Activated CD4-positive, alpha-beta memory T cell treated with anti-CD3 and anti-CD28 coated beads for 36 hours (primary cell): ENCODE measurements at regions of chr6 and their contacts with region 1.

Region 1: DNA sequence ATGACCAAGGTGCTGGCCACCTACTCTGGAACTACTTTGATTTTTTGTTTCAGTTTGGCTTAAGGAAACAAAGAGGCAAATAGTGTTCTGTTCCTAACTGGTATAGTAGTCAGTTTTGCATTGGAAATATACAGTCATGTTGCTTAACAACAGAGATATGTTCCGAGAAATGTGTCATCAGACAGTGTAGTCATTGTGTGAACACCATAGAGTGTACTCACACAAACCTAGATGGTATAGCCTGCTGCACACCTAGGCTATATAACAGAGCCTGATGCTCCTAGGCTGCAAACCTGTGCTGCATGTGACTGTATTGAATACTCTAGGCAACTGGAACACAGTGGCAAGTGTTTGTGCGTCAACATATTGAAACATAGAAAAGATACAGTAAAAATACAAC is 80.4 kb downstream of the ARID1B start:
- DNase-seq: peak; percentile 51
- H3K4me3 Mint-ChIP-seq: no peak overlapping the region
- H3K27ac Mint-ChIP-seq: peak overlapping the region; percentile 90
- H3K4me1 Mint-ChIP-seq: peaks cover 78% of the 10 kb centered on the region
- H3K27me3 Mint-ChIP-seq: no peaks in the 10 kb centered on the region

Region 2: GRCh38 chr6:156686995-156687788 is 170.4 kb before region 1 on chr6:
- CTCF ChIA-PET with region 1: no interaction called
- POLR2A ChIA-PET with region 1: no interaction called
- intact Hi-C with region 1: loop called (anchors 2 kb)
- DNase-seq: peak; percentile 77
- H3K4me3 Mint-ChIP-seq: peak overlapping the region; percentile 77
- H3K27ac Mint-ChIP-seq: peak overlapping the region; percentile 73
- H3K4me1 Mint-ChIP-seq: peaks cover 24% of the 10 kb centered on the region
- H3K27me3 Mint-ChIP-seq: no peaks in the 10 kb centered on the region

Region 3: DNA sequence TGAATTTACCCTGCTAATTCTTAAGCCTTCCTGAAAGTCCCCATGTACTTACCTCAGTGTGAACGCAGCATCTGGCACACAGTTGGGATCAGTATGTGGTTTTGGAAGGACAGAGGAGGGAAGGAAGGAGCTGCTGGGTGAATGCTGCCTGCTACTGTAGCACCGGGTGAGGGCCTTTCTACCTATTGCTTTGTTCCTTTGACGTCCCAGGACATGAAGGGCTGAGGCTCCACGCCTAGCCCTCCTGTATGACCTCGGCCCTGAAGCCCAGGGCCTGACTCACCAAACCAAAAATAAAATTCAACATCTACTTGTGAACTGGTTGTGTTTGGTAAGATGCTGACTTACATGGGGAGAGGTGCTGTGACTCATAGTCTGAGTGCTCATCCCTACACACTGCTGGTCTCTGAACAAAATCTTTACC is 29.3 kb before region 1 on chr6:
- CTCF ChIA-PET with region 1: no interaction called
- POLR2A ChIA-PET with region 1: no interaction called
- intact Hi-C with region 1: loop called (anchors 1 kb)
- DNase-seq: peak; percentile 47
- H3K4me3 Mint-ChIP-seq: no peak overlapping the region
- H3K27ac Mint-ChIP-seq: peak overlapping the region; percentile 65
- H3K4me1 Mint-ChIP-seq: peaks cover 80% of the 10 kb centered on the region
- H3K27me3 Mint-ChIP-seq: no peaks in the 10 kb centered on the region

Region 4: GRCh38 chr6:156953479-156954146 is 96.0 kb after region 1 on chr6:
- CTCF ChIA-PET with region 1: no interaction called
- POLR2A ChIA-PET with region 1: no interaction called
- intact Hi-C with region 1: loop called (anchors 1 kb)
- DNase-seq: peak; percentile 41
- H3K4me3 Mint-ChIP-seq: no peak overlapping the region
- H3K27ac Mint-ChIP-seq: no peak overlapping the region
- H3K4me1 Mint-ChIP-seq: peaks cover 62% of the 10 kb centered on the region
- H3K27me3 Mint-ChIP-seq: no peaks in the 10 kb centered on the region

Region 5: DNA sequence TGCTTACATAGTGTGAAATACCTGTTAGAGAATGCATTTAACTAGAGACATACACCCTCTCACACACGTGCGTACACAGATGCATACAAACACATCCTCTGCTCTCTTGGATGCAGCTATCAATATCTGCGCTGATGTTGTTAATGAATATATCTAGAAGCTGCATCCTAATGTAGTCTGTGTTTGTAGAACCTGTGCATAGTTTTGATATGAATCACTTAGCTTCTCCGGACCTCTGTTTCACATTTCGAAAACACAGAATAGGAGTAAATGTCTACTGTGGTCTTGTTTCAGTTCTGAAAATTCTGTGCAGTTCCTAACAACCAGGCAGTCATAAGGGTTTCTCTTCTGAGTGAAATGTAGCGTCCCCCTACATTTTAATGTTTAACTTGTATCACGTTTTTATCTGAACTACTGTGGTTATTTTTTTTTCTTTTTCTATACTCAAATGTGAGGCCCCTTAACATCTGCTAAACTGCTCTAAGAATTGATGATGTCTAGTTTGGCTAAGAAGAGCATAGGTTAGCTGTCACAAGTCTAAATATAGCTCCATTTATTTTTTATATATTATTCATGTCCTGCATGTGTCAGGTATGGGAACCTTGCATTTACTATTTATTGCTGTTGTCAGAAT is 211.2 kb after region 1 on chr6:
- CTCF ChIA-PET with region 1: no interaction called
- POLR2A ChIA-PET with region 1: no interaction called
- intact Hi-C with region 1: loop called (anchors 1 kb)
- DNase-seq: no peak
- H3K4me3 Mint-ChIP-seq: peak overlapping the region; percentile 18
- H3K27ac Mint-ChIP-seq: peak overlapping the region; percentile 49
- H3K4me1 Mint-ChIP-seq: peaks cover 47% of the 10 kb centered on the region
- H3K27me3 Mint-ChIP-seq: no peaks in the 10 kb centered on the region

Region 6: DNA sequence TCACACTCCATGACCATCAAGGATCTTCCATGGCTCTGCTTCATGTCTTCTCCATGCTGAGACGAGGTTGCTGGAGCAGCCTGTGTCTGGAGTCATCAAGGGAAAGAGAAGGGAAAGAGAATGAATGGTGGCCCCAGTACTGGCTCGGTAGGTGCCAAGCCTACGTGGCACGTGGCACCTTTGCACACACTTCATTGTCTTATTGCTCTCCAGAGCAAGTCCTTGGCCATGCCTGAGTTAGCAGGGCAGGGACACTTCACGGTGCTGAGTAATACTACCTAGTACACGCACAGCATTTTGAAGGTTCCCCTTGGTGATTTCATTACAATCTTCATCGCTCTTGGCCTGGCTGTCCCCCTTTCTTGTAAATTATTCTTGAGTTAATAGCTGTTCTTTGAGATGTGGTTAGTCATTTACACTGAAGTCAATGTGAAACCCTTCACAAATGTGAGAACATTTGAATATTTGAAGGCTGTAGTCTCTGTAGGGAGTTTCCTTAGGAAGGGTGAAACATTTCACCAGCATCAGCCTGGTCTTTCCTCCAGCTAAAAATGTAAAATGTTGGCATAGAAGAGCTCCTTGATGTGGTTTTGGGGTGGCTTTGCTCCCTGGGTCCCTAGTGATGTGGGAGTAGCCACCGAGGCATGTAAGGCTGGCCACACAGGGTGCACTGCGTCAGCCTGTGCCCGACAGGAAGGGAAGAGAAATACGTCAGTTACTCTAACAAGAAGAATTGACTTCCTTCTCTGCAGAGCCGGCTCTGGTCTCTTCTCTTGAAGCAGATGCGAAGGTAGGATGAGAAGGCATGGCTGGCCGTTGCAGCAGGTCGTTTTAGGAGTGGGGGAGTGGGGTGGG is 1791.9 kb after region 1 on chr6 and contains the start of gene SYTL3:
- CTCF ChIA-PET with region 1: no interaction called
- POLR2A ChIA-PET with region 1: no interaction called
- intact Hi-C with region 1: no loop called
- DNase-seq: peak; percentile 93
- H3K4me3 Mint-ChIP-seq: peak within 1 kb of the TSS; percentile 79
- H3K27ac Mint-ChIP-seq: peak within 1 kb of the TSS; percentile 99
- H3K4me1 Mint-ChIP-seq: peaks cover 77% of the 10 kb centered on the region
- H3K27me3 Mint-ChIP-seq: no peaks in the 10 kb centered on the region
- total RNA-seq, gene SYTL3: 181 to 186 TPM